ENCODE measurements at regions of chr4 and their contacts with region 1.

Region 1: DNA sequence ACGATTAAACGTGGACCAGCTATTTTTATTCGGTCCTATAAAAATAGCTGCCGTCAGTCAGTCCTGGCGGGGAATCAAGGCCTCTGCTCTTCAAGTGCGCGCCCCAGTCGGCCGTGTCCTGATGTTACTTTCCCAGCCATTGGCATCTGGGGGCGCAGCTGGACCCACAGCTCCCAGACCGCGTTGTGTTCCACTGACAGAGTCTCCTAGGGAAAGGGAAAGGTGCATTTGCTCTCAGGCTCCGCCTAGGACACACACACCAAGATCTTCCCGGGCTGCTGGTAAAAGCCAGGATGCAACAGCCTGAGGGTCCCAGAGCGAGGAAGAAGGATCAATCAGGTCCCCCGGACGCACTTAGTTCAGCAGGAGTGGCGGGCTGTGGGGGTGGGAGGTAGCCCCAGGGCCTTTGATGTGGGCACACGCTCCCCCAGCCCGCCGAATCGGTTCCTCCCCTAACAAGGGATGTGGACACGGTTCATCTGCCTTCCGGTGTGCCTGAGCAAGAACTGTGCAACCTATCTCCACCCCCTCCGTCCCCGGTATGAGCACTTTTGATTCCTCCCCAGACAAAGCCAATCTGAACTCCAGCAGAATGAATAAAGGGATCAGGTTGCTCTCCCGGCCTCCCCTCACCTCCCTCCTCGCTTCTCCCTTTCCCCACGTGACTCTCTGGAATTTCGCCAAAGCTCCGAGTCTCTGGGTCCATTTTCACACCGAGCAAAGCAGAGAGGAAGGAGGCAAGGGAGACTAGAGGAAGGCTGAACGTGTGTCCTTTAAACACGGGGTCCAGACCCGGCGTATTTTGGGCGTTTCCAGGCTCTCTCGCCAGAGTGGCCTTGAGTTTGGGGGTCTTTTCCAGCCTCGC is 626 bp upstream of the FRAS1 start:
- DNase-seq: no peak
- H3K4me3 Mint-ChIP-seq: peak overlapping the region; percentile 82
- H3K27ac Mint-ChIP-seq: no peak overlapping the region
- H3K4me1 Mint-ChIP-seq: peaks cover 30% of the 10 kb centered on the region
- H3K27me3 Mint-ChIP-seq: peaks cover 65% of the 10 kb centered on the region

Region 2: GRCh38 chr4:78312989-78313753 is 256.7 kb after region 1 on chr4:
- intact Hi-C with region 1: loop called (anchors 10 kb)
- DNase-seq: no peak
- H3K4me3 Mint-ChIP-seq: peak overlapping the region; percentile 10
- H3K27ac Mint-ChIP-seq: no peak overlapping the region
- H3K4me1 Mint-ChIP-seq: peaks cover 22% of the 10 kb centered on the region
- H3K27me3 Mint-ChIP-seq: peaks cover 10% of the 10 kb centered on the region

Measured in activated T-helper 1 cell treated with anti-CD3 and anti-CD28 coated beads, Interleukin-12 subunit alpha, Interleukin-12 subunit beta, Interleukin-2, Interleukin-4 antibody, amounts not matched to agents 30 ng/mL and 10 ng/mL and 1 ng/mL, durations not matched to agents 14 hours and 24 hours and 36 hours (primary cell).